Breast epithelium (tissue), 4 donors: ENCODE measurements at regions of chr14 and their contacts with region 1.

Region 1: DNA sequence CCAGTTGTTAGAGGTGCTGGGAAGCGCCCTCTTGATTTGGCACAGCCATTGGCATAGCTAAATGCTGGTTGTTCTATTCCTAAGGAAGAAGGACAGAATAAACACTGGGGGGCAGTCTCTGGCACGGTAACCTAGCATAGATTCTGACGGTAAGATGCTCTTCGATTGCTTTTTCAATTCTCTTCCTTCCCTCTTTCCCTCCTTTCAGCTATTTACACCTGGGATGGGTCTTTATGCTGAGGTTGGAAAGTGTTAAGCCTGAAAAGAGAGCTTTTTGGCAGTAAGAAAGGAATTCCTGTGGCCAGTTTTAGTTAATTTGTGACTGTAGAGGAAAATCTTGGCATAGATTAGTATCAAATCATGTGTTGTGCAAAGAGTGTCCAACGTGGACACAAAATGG is 162.8 kb downstream of the SNAPC1 start:
- DNase-seq: no peak
- H3K4me3 ChIP-seq: no peak overlapping the region
- H3K27ac ChIP-seq: no peak overlapping the region
- H3K4me1 ChIP-seq: no peaks in the 10 kb centered on the region
- H3K27me3 ChIP-seq: no peaks in the 10 kb centered on the region
- CTCF ChIP-seq: no peak
- POLR2A ChIP-seq: no peak

Region 2: DNA sequence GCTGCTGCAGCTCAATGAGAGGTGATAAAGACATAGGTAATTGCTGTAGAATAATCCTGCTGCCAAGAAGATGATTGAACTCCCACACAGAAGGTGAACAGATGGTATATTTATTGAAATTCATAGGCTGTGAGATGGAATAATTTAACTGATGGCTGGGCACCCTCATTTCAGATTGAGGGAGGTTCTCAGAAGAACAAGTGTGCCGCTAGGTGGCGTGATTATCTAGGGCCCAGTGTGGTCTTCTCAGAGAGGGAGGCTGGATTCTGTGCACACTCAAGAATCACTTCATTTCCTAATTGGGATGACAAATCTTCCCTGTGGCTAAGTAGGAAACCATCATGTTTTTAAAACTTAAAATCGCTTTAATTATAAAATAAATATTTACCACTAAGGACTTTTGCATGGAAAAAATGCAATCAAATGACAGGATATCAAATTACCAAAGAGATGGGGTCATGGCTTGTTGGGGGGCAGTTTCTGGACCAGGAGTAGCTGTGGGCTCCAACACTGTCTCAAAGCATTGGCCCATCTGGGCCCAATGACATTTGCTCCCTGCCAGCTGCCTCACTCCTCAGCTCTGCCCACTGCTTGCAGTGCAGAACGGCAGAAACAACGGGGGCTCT is 30.5 kb before region 1 on chr14:
- intact Hi-C with region 1: loop called (anchors 2 kb)
- DNase-seq: no peak
- H3K4me3 ChIP-seq: no peak overlapping the region
- H3K27ac ChIP-seq: no peak overlapping the region
- H3K4me1 ChIP-seq: no peaks in the 10 kb centered on the region
- H3K27me3 ChIP-seq: peaks cover 0 to 5% of the 10 kb centered on the region in 2 donors
- CTCF ChIP-seq: peak in 2 of 3 donors; percentile 22 to 39
- POLR2A ChIP-seq: no peak